Activated CD4-positive, alpha-beta memory T cell treated with anti-CD3 and anti-CD28 coated beads for 36 hours (primary cell): ENCODE measurements at regions of chr10 and their contacts with region 1.

Region 1: GRCh38 chr10:45249978-45250693 is 65.3 kb downstream of the OR13A1 start:
- DNase-seq: no peak
- H3K4me3 Mint-ChIP-seq: peak overlapping the region; percentile 35
- H3K27ac Mint-ChIP-seq: no peak overlapping the region
- H3K4me1 Mint-ChIP-seq: peaks cover 11% of the 10 kb centered on the region
- H3K27me3 Mint-ChIP-seq: peaks cover 2% of the 10 kb centered on the region

Region 2: DNA sequence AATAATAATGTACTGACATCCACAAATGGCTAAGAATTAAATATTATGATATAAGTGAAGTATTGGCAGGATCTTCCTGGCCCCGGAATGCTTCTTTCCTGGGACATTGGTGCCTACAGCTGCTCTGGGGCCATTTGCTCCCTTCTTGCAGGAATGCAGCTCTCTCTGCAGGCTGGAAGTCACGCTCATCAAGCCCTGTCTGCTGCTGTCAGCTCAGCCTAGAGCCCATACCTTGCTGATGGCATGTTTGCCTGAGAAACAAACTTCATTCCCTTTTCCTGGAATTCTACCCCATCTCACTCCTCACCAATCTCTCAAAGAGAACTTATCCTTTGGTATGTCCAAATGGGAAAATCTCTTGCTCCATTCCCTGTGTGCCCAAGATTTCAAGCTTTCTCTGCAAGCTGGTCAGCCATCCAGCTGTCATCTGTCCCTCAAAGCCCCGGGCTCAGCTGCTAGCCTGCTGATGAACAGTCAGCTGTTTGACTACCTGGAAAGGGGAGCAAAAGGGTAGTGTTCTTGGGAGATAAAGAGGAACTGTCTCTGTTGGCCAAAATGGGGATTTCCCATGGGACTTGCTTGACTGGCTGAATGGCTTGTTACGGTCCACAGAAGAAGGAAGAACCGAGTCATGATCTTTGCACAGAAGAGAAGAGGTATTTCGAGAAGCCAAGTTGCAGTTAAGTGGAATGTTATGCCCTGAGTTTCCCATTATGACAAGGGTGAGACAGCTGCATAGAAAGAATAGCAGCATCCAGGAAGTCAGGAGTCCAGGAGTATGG is 302.6 kb before region 1 on chr10:
- CTCF ChIA-PET with region 1: no interaction called
- POLR2A ChIA-PET with region 1: no interaction called
- intact Hi-C with region 1: no loop called
- DNase-seq: no peak
- H3K4me3 Mint-ChIP-seq: no peak overlapping the region
- H3K27ac Mint-ChIP-seq: no peak overlapping the region
- H3K4me1 Mint-ChIP-seq: no peaks in the 10 kb centered on the region
- H3K27me3 Mint-ChIP-seq: peaks cover 9% of the 10 kb centered on the region

Region 3: GRCh38 chr10:45235798-45236231 is 14.3 kb before region 1 on chr10:
- CTCF ChIA-PET with region 1: interaction called, 12 read pairs
- POLR2A ChIA-PET with region 1: no interaction called
- intact Hi-C with region 1: no loop called
- DNase-seq: no peak
- H3K4me3 Mint-ChIP-seq: no peak overlapping the region
- H3K27ac Mint-ChIP-seq: no peak overlapping the region
- H3K4me1 Mint-ChIP-seq: no peaks in the 10 kb centered on the region
- H3K27me3 Mint-ChIP-seq: peaks cover 8% of the 10 kb centered on the region

Region 4: DNA sequence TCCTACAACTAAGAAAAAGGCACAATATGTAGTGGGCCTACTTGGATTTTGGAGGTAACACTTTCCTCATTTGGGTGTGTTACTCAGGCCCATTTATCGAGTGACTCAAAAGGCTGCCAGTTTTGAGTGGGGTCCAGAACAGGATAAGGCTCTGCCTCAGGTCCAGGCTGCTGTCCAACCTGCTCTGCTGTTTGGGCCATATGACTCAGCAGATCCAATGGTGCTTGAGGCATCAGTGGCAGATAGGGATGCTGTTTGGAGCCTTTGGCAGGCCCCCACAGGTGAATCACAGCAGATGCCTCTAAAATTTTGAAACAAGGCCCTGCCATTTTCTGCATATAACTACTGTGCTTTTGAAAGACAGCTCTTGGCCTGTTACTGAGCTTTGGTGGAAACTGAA is 89.8 kb after region 1 on chr10:
- CTCF ChIA-PET with region 1: no interaction called
- POLR2A ChIA-PET with region 1: no interaction called
- intact Hi-C with region 1: no loop called
- DNase-seq: no peak
- H3K4me3 Mint-ChIP-seq: no peak overlapping the region
- H3K27ac Mint-ChIP-seq: no peak overlapping the region
- H3K4me1 Mint-ChIP-seq: no peaks in the 10 kb centered on the region
- H3K27me3 Mint-ChIP-seq: peaks cover 5% of the 10 kb centered on the region

Region 5: GRCh38 chr10:45464958-45465567 is 214.9 kb after region 1 on chr10:
- CTCF ChIA-PET with region 1: interaction called, 14 read pairs
- POLR2A ChIA-PET with region 1: no interaction called
- intact Hi-C with region 1: loop called (anchors 1 kb)
- DNase-seq: peak; percentile 87
- H3K4me3 Mint-ChIP-seq: no peak overlapping the region
- H3K27ac Mint-ChIP-seq: no peak overlapping the region
- H3K4me1 Mint-ChIP-seq: peaks cover 9% of the 10 kb centered on the region
- H3K27me3 Mint-ChIP-seq: no peaks in the 10 kb centered on the region